ENCODE measurements at regions of chr2 and their contacts with region 1.

Region 1: GRCh38 chr2:10787176-10787968 is 25.2 kb downstream of the PDIA6 start:
- DNase-seq: no peak
- H3K4me3 ChIP-seq: no peak overlapping the region
- H3K27ac ChIP-seq: no peak overlapping the region
- H3K4me1 ChIP-seq: no peaks in the 10 kb centered on the region
- H3K27me3 ChIP-seq: no peaks in the 10 kb centered on the region
- CTCF ChIP-seq: peak; percentile 15 to 49 (median 29)

Region 2: DNA sequence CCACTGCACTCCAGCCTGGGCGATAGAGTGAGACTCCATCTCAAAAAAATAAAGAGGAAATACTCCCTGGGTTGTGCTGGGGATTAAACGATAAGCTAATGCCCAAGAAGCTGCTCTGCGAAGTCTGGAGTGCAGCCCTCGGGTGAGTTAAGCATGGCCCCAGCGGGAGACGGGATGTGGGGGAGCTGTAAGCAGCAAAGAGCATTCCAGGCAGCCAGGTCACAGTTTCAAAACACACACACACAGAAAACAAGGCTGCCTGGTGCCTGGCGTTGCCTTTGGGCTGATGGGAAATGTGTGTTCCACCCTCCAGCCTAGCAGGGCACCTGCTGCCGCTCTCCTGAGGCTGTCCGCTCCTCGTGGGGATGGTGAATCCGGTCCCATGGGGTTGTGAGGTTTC is 363.3 kb before region 1 on chr2:
- dilution Hi-C with region 1: no loop called
- DNase-seq: no peak
- H3K4me3 ChIP-seq: no peak overlapping the region
- H3K27ac ChIP-seq: no peak overlapping the region
- H3K4me1 ChIP-seq: no peaks in the 10 kb centered on the region
- H3K27me3 ChIP-seq: no peaks in the 10 kb centered on the region
- CTCF ChIP-seq: no peak

Region 3: DNA sequence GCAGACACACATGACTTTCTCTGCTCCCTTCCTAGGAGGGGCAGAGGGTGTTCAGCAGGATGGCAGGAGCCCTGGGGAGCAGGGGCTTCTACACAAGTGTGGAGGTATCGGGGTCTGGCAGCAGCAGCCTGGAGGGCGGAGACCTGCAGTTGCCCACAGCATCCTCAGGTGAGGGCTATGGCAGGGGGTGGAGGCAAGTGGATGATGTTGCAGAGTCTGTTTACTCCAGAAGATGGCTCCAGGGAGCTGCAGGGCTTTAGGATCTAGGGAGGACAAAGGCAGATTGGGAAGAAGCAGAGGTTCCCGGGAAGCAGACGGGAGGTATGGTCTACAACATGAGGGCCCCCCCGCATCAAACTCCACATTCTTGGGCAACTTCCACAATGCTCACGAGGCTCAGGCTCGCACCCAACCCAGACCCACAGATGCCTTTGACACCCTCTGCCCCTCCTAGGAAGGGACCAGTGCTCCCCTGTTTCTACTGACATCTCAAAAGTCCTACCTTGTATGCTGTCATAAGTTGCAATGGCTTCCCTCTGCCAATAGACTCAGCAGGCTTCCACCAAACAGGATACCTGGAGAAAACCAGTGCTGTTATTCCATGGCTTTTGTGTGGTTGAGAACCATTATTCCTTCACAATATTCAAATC is 78.0 kb before region 1 on chr2:
- dilution Hi-C with region 1: loop called (anchors 10 kb)
- DNase-seq: no peak
- H3K4me3 ChIP-seq: no peak overlapping the region
- H3K27ac ChIP-seq: no peak overlapping the region
- H3K4me1 ChIP-seq: peaks cover 3% of the 10 kb centered on the region
- H3K27me3 ChIP-seq: peaks cover 8% of the 10 kb centered on the region
- CTCF ChIP-seq: peak; percentile 62 to 88 (median 86)